Gastrocnemius medialis (tissue), 4 donors: ENCODE measurements at regions of chr1 and their contacts with region 1.

Region 1: GRCh38 chr1:232968965-232969364 is 18.6 kb downstream of the NTPCR start:
- DNase-seq: peak; percentile 87 to 91
- ATAC-seq: peak; percentile 87 to 88
- H3K4me3 ChIP-seq: no peak overlapping the region
- H3K27ac ChIP-seq: peak overlapping the region; percentile 74 to 81 (median 76)
- H3K4me1 ChIP-seq: peaks cover 34 to 40% of the 10 kb centered on the region in 2 donors
- H3K27me3 ChIP-seq: no peaks in the 10 kb centered on the region
- CTCF ChIP-seq: no peak
- POLR2A ChIP-seq: peak in 1 of 2 donors; percentile 18

Region 2: GRCh38 chr1:232805269-232806185 is 163.4 kb before region 1 on chr1 and contains the start of gene MAP10:
- in situ Hi-C with region 1: no loop called
- intact Hi-C with region 1: loop called (anchors 5 kb)
- DNase-seq: peak; percentile 28 to 66
- ATAC-seq: peak; percentile 84 to 86
- H3K4me3 ChIP-seq: peak within 1 kb of the TSS; percentile 75 to 85 (median 76)
- H3K27ac ChIP-seq: peak within 1 kb of the TSS; percentile 78 to 83 (median 82)
- H3K4me1 ChIP-seq: peaks cover 28 to 54% of the 10 kb centered on the region in 2 donors
- H3K27me3 ChIP-seq: no peaks in the 10 kb centered on the region
- CTCF ChIP-seq: no peak
- POLR2A ChIP-seq: peak; percentile 23 to 34
- total RNA-seq, gene MAP10: 1.9 to 2.6 (median 2.3) TPM

Region 3: DNA sequence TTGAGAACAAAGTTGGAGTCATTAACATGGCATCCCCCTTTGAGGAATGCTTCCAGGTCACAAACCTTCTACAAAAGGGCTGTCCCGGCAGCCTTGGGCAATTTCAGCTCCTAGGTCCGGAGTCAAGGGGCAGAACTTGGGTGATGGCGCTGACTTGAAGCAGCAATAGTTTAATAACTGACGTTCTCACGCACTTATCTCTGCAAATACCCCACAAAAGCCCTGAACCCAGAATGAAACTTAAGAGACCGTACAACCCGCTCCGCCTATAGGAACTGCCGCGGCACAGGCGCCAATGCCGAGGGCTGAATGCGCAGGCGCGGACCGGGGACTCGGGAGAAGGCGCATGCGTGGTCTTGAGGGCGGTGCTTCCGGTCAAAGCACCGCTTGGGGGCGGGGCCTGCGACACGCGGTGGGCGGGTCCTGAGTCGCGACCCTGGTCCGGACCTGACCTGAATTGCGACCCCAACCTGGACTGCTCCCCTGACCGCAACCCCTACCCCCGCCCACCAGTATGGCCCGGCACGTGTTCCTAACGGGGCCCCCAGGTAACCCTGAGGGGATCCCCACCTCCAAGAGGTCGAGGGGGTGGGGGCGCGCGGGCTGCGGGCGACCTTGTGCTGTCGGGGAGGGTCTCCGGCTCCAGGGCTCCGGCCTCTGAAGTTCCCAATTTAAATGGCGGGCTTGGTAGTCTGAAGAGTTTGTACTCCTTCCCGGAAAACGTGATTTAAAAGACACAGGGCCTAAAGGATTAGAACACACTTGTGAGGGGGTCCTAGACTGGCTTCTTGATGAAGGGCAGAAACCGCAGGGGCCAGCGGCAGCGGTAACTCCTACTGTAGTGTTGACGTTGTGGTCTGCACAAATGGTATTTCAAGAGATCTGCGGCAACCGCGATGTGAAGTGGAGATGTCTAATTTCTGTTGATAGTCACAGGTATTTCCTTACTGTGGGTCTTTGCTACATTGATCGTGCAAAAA is 18.5 kb before region 1 on chr1 and contains the start of gene NTPCR:
- in situ Hi-C with region 1: no loop called
- intact Hi-C with region 1: loop called (anchors 2 kb)
- DNase-seq: peak; percentile 88 to 90
- ATAC-seq: peak; percentile 92 to 95
- H3K4me3 ChIP-seq: peak within 1 kb of the TSS; percentile 77 to 94 (median 88)
- H3K27ac ChIP-seq: peak within 1 kb of the TSS; percentile 88 to 96 (median 92)
- H3K4me1 ChIP-seq: peaks cover 19 to 27% of the 10 kb centered on the region in 2 donors
- H3K27me3 ChIP-seq: no peaks in the 10 kb centered on the region
- CTCF ChIP-seq: peak in 3 of 5 experiments; percentile 6 to 39 (median 16)
- POLR2A ChIP-seq: peak; percentile 37 to 40
- total RNA-seq, gene NTPCR: 20.5 to 33.7 (median 24.2) TPM

Region 4: DNA sequence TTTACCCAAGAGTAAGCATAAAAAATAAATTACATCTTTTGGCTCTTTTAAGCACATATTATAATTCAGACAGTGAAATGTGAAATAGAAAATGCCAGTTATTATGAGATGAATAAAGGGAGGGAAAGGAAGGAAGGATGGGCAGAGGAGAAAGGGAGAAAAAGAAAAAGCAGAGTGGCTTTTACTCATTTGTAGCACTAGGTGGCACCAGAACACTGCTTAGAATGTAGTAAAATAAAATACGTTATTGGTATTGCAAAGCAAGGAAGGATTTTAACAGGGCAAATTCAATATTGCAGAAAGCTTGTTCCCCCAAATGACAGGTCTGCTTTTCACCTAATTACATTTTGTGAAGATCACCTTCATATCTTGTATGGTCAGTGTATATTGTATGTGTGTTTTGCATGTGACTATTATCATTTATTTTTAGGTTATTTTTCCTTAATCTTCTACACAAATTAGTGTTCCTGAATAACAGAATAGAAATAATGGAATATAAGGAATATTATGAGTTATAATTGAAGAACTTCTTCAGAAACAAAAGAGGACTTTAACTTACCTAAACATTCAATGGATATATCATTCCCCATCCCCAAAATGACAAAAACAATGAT is 335.6 kb after region 1 on chr1:
- in situ Hi-C with region 1: no loop called
- intact Hi-C with region 1: no loop called
- DNase-seq: no peak
- ATAC-seq: no peak
- H3K4me3 ChIP-seq: no peak overlapping the region
- H3K27ac ChIP-seq: no peak overlapping the region
- H3K4me1 ChIP-seq: no peaks in the 10 kb centered on the region
- H3K27me3 ChIP-seq: no peaks in the 10 kb centered on the region
- CTCF ChIP-seq: peak in 3 of 5 experiments; percentile 18 to 59 (median 50)
- POLR2A ChIP-seq: no peak

Region 5: GRCh38 chr1:234065794-234066447 is 1097.0 kb after region 1 on chr1:
- in situ Hi-C with region 1: no loop called
- intact Hi-C with region 1: no loop called
- DNase-seq: no peak
- ATAC-seq: no peak
- H3K4me3 ChIP-seq: no peak overlapping the region
- H3K27ac ChIP-seq: no peak overlapping the region
- H3K4me1 ChIP-seq: no peaks in the 10 kb centered on the region
- H3K27me3 ChIP-seq: no peaks in the 10 kb centered on the region
- CTCF ChIP-seq: peak in 3 of 5 experiments; percentile 17 to 54 (median 23)
- POLR2A ChIP-seq: no peak

Region 6: DNA sequence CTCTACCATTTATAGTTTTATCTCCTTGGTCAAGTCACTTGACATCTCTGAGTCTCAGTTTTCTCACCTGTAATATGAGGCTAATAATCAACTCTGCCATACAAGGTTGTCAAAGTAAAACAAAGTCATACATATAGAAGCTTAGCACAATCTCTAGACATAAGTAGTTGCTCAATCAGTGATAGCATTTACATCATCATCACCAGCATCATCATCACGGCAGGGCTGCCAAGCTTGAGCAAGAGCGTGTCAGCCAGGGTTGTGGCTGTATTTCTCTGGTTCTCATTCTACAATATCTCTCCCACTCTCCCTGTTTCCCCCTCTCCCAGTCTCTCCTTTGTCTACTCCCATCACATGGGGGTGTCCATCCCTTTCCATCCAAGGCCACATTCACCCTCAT is 1362.5 kb after region 1 on chr1:
- in situ Hi-C with region 1: no loop called
- intact Hi-C with region 1: no loop called
- DNase-seq: no peak
- ATAC-seq: no peak
- H3K4me3 ChIP-seq: no peak overlapping the region
- H3K27ac ChIP-seq: no peak overlapping the region
- H3K4me1 ChIP-seq: no peaks in the 10 kb centered on the region
- H3K27me3 ChIP-seq: no peaks in the 10 kb centered on the region
- CTCF ChIP-seq: no peak
- POLR2A ChIP-seq: no peak